ENCODE measurements at regions of chr12 and their contacts with region 1.

Region 1: GRCh38 chr12:1605129-1606020 is 11.0 kb upstream of the FBXL14 start:
- DNase-seq: peak; percentile 68
- ATAC-seq: peak; percentile 78
- H3K4me3 ChIP-seq: peak overlapping the region; percentile 32 to 67
- H3K27ac ChIP-seq: peak overlapping the region; percentile 79
- H3K4me1 ChIP-seq: peaks cover 33% of the 10 kb centered on the region
- H3K27me3 ChIP-seq: no peaks in the 10 kb centered on the region
- CTCF ChIP-seq: peak; percentile 79

Region 2: DNA sequence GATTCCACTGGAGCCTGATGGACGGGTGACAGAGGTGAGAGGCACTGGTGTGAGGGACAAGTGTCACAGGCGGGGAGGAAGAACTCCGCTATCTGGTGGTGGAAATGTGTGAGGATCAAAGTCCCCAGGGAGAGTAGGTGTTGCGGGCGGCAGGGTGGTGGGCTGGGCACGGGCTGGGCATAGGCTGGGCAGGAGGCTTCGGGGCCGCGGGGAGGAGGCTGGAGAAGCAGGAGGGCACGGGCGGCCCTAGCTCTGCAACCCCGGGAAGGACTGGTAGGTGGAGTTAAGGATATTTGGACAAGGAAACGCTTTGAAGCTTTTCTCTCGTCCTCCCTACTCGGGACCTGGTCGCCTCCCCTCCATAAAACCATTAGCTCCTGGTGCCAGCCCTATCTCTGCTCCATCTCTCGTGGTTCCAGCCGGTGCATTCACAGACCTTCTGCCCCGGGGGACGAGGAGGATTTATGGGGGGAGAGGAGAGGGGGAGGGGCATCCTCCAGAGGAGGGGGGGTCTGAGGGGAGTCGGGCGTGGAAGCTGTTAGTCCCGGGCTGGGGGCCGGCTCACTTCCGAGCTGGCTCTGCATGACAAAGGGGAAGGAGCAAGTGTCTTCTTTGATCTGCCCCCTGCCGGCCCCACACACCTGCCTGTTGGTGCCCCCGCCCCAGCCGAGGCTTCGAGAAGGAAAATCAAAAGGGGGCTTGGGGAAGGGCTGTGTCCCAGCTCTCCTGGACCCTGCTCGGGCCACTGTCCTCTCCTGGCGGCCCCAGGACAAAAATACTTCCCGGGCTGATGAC is 24.2 kb after region 1 on chr12:
- CTCF ChIA-PET with region 1: interaction called, 15 read pairs
- POLR2A ChIA-PET with region 1: no interaction called
- in situ Hi-C with region 1: no loop called
- intact Hi-C with region 1: no loop called
- DNase-seq: no peak
- ATAC-seq: peak; percentile 37
- H3K4me3 ChIP-seq: peak overlapping the region; percentile 19 to 23; a peak in 1 of 4 replicates
- H3K27ac ChIP-seq: no peak overlapping the region
- H3K4me1 ChIP-seq: peaks cover 4% of the 10 kb centered on the region; the same call in 1 of the 2 replicates
- H3K27me3 ChIP-seq: no peaks in the 10 kb centered on the region
- CTCF ChIP-seq: no peak

Measured in Panc1 (cell line).